Naive thymus-derived CD4-positive, alpha-beta T cell (primary cell): ENCODE measurements at regions of chr15 and their contacts with region 1.

Region 1: GRCh38 chr15:101206176-101206591 is 45.7 kb downstream of the CHSY1 start:
- DNase-seq: peak in 8 of 9 donors; percentile 5 to 79 (median 26)
- ATAC-seq: peak; percentile 64
- H3K4me3 ChIP-seq: peak overlapping the region; percentile 32
- H3K4me3 Mint-ChIP-seq: peak overlapping the region; percentile 79 to 93 (median 84)
- H3K27ac ChIP-seq: no peak overlapping the region
- H3K27ac Mint-ChIP-seq: peak overlapping the region; percentile 39 to 90 (median 73)
- H3K4me1 ChIP-seq: peaks cover 5 to 9% of the 10 kb centered on the region in 2 donors
- H3K4me1 Mint-ChIP-seq: peaks cover 44 to 86% (median 81%) of the 10 kb centered on the region in 7 donors
- H3K27me3 ChIP-seq: no peaks in the 10 kb centered on the region
- H3K27me3 Mint-ChIP-seq: no peaks in the 10 kb centered on the region

Region 2: GRCh38 chr15:100596792-100597191 is 609.4 kb before region 1 on chr15:
- CTCF ChIA-PET with region 1: no interaction called
- POLR2A ChIA-PET with region 1: no interaction called
- intact Hi-C with region 1: loop called in 1 of 2 experiments (anchors 5 kb)
- DNase-seq: peak; percentile 52 to 97 (median 94)
- ATAC-seq: peak; percentile 93
- H3K4me3 ChIP-seq: peak overlapping the region; percentile 49
- H3K4me3 Mint-ChIP-seq: peak overlapping the region in 7 of 10 donors; percentile 69 to 87 (median 86)
- H3K27ac ChIP-seq: peak overlapping the region; percentile 91
- H3K27ac Mint-ChIP-seq: peak overlapping the region in 4 of 9 donors; percentile 96 to 98 (median 96)
- H3K4me1 ChIP-seq: peaks cover 52 to 82% of the 10 kb centered on the region in 2 donors
- H3K4me1 Mint-ChIP-seq: peaks cover 0 to 78% (median 51%) of the 10 kb centered on the region in 7 donors
- H3K27me3 ChIP-seq: no peaks in the 10 kb centered on the region
- H3K27me3 Mint-ChIP-seq: peaks cover 0 to 2% (median 0%) of the 10 kb centered on the region in 5 donors

Region 3: DNA sequence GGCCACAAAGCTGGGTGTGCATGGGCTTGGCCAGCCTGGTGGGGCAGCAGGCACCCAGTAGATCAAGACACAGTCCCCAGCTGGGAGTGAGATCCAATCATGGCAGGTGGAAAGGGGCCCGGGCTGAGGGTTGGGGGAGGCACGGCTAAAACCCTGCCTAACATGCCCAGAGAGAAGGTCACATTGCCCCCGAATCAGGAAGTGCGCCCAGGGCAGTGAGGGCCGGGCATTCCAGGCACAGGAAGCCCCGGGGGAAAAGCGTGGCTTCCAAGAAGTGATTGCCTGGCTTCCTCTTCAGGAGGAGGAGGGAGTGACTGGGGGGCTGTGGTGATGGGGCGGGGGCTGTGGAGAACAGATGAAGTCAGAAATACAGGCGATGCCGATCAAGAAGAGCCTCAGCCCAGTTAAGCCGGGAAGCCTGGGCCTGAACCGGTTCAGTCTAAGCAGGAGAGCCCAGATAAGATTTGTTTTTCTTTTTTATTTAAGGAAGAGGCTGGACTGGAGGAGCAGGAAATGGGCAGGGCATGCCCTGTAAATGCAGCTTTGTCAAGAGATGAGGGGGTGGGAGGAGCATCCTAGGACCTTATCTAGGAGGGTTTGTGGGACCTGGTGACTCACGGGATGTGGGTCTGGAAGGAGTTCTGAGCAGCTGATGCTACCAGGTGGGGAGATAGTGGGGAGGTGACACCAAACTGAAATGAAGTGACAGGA is 38.3 kb before region 1 on chr15:
- CTCF ChIA-PET with region 1: no interaction called
- POLR2A ChIA-PET with region 1: no interaction called
- intact Hi-C with region 1: loop called in 1 of 2 experiments (anchors 5 kb)
- DNase-seq: peak in 4 of 9 donors; percentile 4 to 70 (median 12)
- ATAC-seq: peak; percentile 81
- H3K4me3 ChIP-seq: no peak overlapping the region
- H3K4me3 Mint-ChIP-seq: peak overlapping the region; percentile 34 to 78 (median 53)
- H3K27ac ChIP-seq: no peak overlapping the region
- H3K27ac Mint-ChIP-seq: peak overlapping the region in 8 of 9 donors; percentile 5 to 96 (median 49)
- H3K4me1 ChIP-seq: peaks cover 0 to 14% of the 10 kb centered on the region in 2 donors
- H3K4me1 Mint-ChIP-seq: peaks cover 12 to 50% (median 20%) of the 10 kb centered on the region in 7 donors
- H3K27me3 ChIP-seq: no peaks in the 10 kb centered on the region
- H3K27me3 Mint-ChIP-seq: no peaks in the 10 kb centered on the region

Region 4: GRCh38 chr15:101188637-101189408 is 17.4 kb before region 1 on chr15:
- CTCF ChIA-PET with region 1: no interaction called
- POLR2A ChIA-PET with region 1: no interaction called
- intact Hi-C with region 1: loop called in 1 of 2 experiments (anchors 1 kb)
- DNase-seq: no peak
- ATAC-seq: no peak
- H3K4me3 ChIP-seq: no peak overlapping the region
- H3K4me3 Mint-ChIP-seq: peak overlapping the region in 1 of 10 donors; percentile 67
- H3K27ac ChIP-seq: no peak overlapping the region
- H3K27ac Mint-ChIP-seq: peak overlapping the region in 2 of 9 donors; percentile 41 to 87
- H3K4me1 ChIP-seq: peaks cover 7 to 14% of the 10 kb centered on the region in 2 donors
- H3K4me1 Mint-ChIP-seq: peaks cover 40 to 71% (median 42%) of the 10 kb centered on the region in 7 donors
- H3K27me3 ChIP-seq: no peaks in the 10 kb centered on the region
- H3K27me3 Mint-ChIP-seq: no peaks in the 10 kb centered on the region

Region 5: DNA sequence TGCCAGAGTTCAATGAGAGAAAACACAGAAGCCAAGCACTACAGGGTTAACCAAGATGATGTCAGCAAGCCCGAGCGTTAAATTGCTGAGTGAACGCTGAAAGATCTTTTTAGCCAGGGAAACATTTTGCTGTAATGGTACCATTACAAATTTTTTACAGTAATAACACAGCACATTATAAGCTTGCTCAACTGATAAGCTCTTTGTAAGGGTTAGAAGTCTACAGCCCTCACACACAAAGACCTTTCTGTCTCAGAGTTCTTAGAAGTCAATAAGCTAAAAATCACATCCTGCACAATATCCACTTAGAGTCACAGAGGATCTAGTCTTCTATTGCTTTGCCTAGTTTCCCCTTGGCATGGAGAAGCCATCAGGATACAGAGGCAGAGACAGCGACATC is 15.7 kb after region 1 on chr15:
- CTCF ChIA-PET with region 1: interaction called, 3 read pairs
- POLR2A ChIA-PET with region 1: no interaction called
- intact Hi-C with region 1: loop called in 1 of 2 experiments (anchors 1 kb)
- DNase-seq: no peak
- ATAC-seq: no peak
- H3K4me3 ChIP-seq: no peak overlapping the region
- H3K4me3 Mint-ChIP-seq: peak overlapping the region in 1 of 10 donors; percentile 11
- H3K27ac ChIP-seq: no peak overlapping the region
- H3K27ac Mint-ChIP-seq: peak overlapping the region in 2 of 9 donors; percentile 41 to 60
- H3K4me1 ChIP-seq: peaks cover 0 to 6% of the 10 kb centered on the region in 2 donors
- H3K4me1 Mint-ChIP-seq: peaks cover 39 to 68% (median 60%) of the 10 kb centered on the region in 7 donors
- H3K27me3 ChIP-seq: no peaks in the 10 kb centered on the region
- H3K27me3 Mint-ChIP-seq: no peaks in the 10 kb centered on the region

Region 6: DNA sequence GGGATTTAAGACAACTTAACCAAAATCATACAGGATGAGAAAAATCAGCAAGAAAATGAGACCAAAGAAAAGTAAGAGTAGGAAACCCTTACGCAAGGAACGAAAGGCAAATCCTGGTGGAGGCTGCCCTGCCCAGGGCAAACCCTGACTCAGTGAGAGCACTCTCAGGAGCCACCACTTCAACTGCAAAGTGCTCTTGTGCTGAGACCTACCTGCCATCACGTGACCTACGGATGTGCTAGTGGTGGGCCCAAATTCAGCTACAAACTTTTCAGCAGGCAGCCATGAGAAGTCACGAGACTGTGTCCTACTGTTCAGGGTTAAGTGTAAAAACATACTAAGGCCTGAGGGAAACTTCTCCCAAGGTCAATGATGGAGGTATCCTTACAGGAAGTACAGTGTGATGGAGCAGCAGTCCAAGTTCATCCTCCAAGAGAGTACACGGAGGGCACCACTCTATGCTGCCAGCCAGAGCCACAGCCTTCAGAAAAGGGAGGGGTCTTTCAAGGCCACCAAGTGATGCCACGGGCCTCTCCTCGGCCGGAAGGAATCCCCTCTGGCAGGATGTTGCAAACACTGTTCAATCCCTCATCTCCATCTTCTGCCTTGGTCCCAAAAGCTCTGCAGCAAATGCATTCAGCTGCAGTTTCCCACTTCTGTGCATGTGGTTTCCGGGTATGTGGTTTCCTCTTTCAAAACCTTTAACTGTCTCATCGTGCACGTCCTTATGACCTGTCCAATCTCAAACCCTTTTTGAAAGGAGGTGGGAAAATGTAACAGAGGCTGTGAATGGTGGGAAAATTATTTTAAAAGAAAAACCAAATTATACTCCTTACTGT is 36.2 kb after region 1 on chr15:
- CTCF ChIA-PET with region 1: interaction called, 4 read pairs
- POLR2A ChIA-PET with region 1: interaction called, 3 read pairs
- intact Hi-C with region 1: loop called (anchors 1 to 5 kb)
- DNase-seq: peak in 8 of 9 donors; percentile 54 to 79 (median 74)
- ATAC-seq: peak; percentile 93
- H3K4me3 ChIP-seq: peak overlapping the region; percentile 40
- H3K4me3 Mint-ChIP-seq: peak overlapping the region; percentile 60 to 83 (median 71)
- H3K27ac ChIP-seq: no peak overlapping the region
- H3K27ac Mint-ChIP-seq: peak overlapping the region in 8 of 9 donors; percentile 53 to 89 (median 74)
- H3K4me1 ChIP-seq: peaks cover 63 to 80% of the 10 kb centered on the region in 2 donors
- H3K4me1 Mint-ChIP-seq: peaks cover 56 to 88% (median 85%) of the 10 kb centered on the region in 7 donors
- H3K27me3 ChIP-seq: no peaks in the 10 kb centered on the region
- H3K27me3 Mint-ChIP-seq: no peaks in the 10 kb centered on the region

Region 7: DNA sequence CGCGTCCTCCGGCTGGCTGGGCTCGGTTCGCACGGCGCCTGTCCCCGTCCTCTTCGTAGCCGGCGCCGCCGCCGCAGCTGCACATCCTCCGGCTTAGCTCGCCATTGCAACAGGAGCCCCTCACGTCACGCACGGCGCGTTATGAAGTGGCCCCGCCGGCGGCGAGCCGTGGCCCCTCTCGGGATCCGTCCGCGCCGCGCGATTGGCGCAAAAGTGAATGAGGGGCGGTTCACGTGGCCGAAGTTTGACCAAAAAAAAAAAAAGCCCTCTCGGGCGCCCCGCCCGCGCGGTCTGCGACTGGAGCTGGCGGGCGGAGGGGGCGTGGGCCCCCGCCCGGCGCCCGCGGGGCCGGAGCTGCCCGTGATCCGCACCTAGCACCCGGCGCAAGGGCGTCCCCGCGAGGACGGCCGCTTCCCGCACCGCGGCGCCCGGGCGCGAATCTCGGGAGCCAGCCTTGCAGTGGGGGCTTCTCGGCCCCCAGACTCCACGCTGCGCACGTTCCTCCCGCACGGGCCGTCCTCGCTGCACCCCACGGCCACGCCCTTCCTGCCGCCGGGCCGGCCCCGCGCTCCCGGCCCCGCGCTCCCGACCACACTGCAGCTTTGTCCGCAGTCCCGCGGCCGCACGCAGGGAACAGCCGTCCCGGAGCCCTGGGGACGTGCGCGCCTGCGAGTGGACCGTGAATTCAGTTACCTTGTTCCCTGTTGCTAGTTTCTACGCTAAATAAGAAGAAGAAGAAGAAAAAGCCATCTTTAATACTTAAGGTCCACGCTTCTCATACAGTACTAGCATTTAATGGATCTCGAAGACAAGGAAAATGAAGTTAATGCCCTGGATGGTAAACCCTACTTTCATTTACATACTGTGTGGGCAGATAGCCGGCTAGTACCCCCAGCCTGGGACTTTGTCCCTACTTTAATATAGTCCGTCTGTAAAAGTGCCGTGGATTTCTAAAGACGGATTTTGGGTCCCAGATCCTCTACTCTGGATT is 45.9 kb after region 1 on chr15 and contains the start of gene CHSY1:
- CTCF ChIA-PET with region 1: no interaction called
- POLR2A ChIA-PET with region 1: no interaction called
- intact Hi-C with region 1: loop called in 1 of 2 experiments (anchors 1 kb)
- DNase-seq: peak; percentile 71 to 91 (median 81)
- ATAC-seq: peak; percentile 91
- H3K4me3 ChIP-seq: peak within 1 kb of the TSS; percentile 64
- H3K4me3 Mint-ChIP-seq: peak within 1 kb of the TSS; percentile 84 to 97 (median 94)
- H3K27ac ChIP-seq: peak within 1 kb of the TSS; percentile 62
- H3K27ac Mint-ChIP-seq: peak within 1 kb of the TSS; percentile 77 to 96 (median 84)
- H3K4me1 ChIP-seq: peaks cover 17 to 21% of the 10 kb centered on the region in 2 donors
- H3K4me1 Mint-ChIP-seq: peaks cover 17 to 63% (median 37%) of the 10 kb centered on the region in 7 donors
- H3K27me3 ChIP-seq: no peaks in the 10 kb centered on the region
- H3K27me3 Mint-ChIP-seq: no peaks in the 10 kb centered on the region
- total RNA-seq, gene CHSY1: 8.9 to 47.0 (median 10.8) TPM